Mammary epithelial cell (primary cell): ENCODE measurements at regions of chr6 and their contacts with region 1.

Region 1: DNA sequence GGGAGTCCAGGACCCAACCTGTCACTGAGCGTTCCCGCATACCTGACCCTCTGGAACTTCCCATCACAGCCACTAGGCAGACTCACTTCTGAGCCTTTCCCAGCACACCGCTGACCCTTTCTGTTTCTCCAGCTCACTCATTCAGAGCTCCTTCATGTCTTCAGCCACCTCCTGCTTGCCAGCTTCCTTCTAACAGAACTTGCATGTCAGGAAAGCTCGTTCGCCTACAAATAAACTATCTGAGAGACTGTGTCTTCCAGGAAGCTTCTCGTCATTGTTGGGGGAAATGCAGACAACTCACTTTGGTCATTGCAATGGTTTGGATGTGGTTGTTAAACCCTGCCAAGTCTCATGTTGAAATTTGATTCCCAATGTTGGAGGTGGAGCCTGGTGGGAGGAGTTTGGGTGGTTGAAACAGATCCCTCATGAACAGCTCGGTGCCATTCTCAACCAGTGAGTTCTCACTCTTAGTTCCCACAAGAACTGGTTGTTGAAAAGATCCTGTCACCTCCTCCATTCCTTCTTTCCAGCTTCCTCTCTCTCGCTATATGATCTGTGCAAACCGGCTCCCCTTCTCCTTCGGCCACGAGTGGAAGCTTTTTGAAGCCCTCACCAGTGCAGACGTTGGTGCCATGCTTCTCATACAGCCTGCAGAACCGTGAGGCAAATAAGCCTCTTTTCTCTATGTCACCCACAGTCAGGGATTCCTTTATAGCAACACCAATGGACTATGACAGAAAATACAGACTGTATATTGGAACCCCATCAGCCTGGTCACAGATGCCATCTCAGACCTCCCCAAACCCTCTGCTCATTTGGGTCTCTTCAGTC is 1.4 kb upstream of the MUC21 start:
- DNase-seq: peak; percentile 82
- H3K4me3 ChIP-seq: peak overlapping the region; percentile 14 to 41 (median 15)
- H3K27ac ChIP-seq: no peak overlapping the region
- H3K4me1 ChIP-seq: peaks cover 6% of the 10 kb centered on the region
- H3K27me3 ChIP-seq: no peaks in the 10 kb centered on the region
- CTCF ChIP-seq: peak; percentile 39 to 63

Region 2: DNA sequence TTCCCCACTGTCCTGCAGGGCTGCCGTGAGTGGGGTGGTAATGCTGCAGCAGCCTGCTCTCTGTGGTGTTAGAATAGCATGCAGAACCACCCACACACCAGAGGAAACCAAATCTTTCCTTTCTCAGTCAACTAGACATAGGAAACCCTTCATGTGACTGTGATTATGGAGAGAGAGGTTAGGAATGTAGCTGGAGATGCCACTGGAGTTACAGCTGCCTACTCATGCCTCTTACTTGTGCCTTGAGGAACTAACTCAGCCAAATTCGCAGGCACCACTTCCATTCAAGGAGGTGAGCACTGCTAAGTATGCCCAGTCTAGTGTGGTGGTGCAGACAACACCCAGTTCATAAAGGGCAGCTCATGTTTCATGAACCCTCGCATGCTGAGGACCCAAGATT is 55.5 kb after region 1 on chr6:
- CTCF ChIA-PET with region 1: no interaction called
- dilution Hi-C with region 1: no loop called
- in situ Hi-C with region 1: no loop called
- intact Hi-C with region 1: loop called (anchors 5 kb)
- DNase-seq: peak; percentile 59
- H3K4me3 ChIP-seq: no peak overlapping the region
- H3K27ac ChIP-seq: no peak overlapping the region
- H3K4me1 ChIP-seq: peaks cover 6% of the 10 kb centered on the region
- H3K27me3 ChIP-seq: no peaks in the 10 kb centered on the region
- CTCF ChIP-seq: no peak

Region 3: GRCh38 chr6:31058128-31058894 is 76.2 kb after region 1 on chr6:
- CTCF ChIA-PET with region 1: no interaction called
- dilution Hi-C with region 1: no loop called
- in situ Hi-C with region 1: no loop called
- intact Hi-C with region 1: loop called (anchors 5 kb)
- DNase-seq: peak; percentile 99
- H3K4me3 ChIP-seq: no peak overlapping the region
- H3K27ac ChIP-seq: peak overlapping the region; percentile 99
- H3K4me1 ChIP-seq: peaks cover 43% of the 10 kb centered on the region
- H3K27me3 ChIP-seq: no peaks in the 10 kb centered on the region
- CTCF ChIP-seq: peak in 1 of 2 donors; percentile 46